H1 (cell line): ENCODE measurements at regions of chr15 and their contacts with region 1.

Region 1: GRCh38 chr15:68783226-68784058 is 37.3 kb downstream of the ANP32A start:
- DNase-seq: peak in 1 of 2 experiments; percentile 82
- H3K4me3 ChIP-seq: no peak overlapping the region
- H3K27ac ChIP-seq: no peak overlapping the region
- H3K4me1 ChIP-seq: peaks cover 0 to 12% (median 4%) of the 10 kb centered on the region in 4 experiments; a peak in 5 of 7 replicates
- H3K27me3 ChIP-seq: no peaks in the 10 kb centered on the region
- CTCF ChIP-seq: peak; percentile 77 to 79 (median 79)
- EP300 ChIP-seq: no peak
- POLR2A ChIP-seq: no peak
- RAD21 ChIP-seq: peak; percentile 84 to 86

Region 2: DNA sequence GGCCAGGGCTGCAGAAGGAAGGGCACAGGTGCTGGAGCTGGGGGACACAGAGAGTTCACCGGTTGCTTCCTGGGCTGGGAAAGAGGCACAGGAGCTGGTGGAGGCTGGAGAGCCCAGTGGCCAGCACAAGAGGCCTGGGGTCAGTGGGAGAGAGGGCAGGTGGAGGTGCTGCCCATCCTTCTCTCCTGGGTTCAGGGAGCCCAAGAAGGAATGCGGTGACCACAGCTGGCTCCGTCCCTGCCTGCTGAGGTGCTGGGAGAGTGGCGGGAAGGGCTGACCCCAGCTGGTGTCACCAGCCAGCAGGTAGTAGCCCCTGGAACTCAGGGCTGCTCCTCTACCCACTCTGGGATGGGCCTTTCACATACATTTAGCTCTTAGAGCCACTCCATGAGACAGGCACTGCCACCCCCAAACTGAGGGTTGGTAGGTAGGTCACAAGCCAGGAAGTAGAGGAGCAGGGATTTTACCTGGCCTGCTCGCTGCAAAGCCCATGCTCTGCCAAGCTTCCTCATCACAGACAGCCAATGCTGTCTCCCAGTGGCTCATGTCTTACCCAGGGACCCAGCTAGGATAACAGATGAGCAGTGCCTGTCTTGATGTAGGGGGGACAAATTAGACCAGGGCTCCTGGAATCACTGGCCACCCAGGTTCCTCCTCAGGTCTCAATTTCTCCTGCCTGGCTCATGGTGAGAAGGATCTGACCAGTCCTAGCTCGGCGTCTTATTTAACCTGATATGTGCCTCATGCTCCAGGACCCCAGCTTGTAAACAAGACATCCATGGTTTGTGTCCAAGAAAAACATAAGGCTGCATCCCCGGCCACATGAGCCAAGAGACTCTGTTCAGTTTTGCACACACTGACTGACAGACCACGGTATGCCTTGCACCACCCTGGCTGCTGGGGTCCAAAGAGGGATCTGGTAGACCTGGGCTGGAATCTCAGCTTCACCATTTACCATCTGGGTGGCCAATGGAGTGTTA is 85.4 kb before region 1 on chr15:
- CTCF ChIA-PET with region 1: no interaction called
- POLR2A ChIA-PET with region 1: no interaction called
- DNase-seq: no peak
- H3K4me3 ChIP-seq: no peak overlapping the region
- H3K27ac ChIP-seq: no peak overlapping the region
- H3K4me1 ChIP-seq: peaks cover 2 to 26% (median 16%) of the 10 kb centered on the region in 4 experiments
- H3K27me3 ChIP-seq: 0 out of 7 replicates have a peak, but pooled peaks cover 0 to 3% (median 0%) of the 10 kb centered on the region in 4 experiments
- CTCF ChIP-seq: no peak
- EP300 ChIP-seq: no peak
- POLR2A ChIP-seq: no peak
- RAD21 ChIP-seq: no peak

Region 3: DNA sequence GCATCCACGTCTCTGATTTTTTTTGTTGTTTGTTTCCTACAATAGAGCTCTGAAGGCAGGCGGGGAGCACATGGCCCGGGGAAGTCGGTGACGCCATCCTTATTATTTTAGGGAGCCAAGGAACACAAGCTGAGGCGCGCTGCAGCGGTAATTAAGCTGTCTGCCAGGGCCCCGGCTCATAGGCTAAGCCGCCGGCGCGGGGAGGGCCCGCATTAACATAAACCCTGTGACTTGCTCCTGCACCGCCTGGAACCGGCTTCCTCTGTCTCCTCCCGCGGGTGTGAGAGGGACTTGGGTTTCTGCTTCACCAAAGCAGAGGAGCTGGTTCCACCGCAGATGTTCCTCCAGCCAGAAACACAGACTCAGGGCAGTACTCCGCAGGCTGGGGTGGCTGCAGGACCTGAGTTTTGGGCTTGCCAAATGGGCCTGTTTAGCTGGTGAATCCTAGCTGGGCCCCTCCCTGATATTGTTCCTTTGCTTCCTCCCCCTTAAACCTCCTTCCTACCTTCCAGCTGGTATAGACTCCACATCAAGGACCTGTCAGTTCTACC is 11.9 kb after region 1 on chr15:
- CTCF ChIA-PET with region 1: interaction called, 21 read pairs
- POLR2A ChIA-PET with region 1: interaction called, 4 read pairs
- DNase-seq: peak; percentile 72 to 82
- H3K4me3 ChIP-seq: peak overlapping the region in 3 of 4 experiments; percentile 1 to 32 (median 7); a peak in 4 of 8 replicates
- H3K27ac ChIP-seq: peak overlapping the region; percentile 61
- H3K4me1 ChIP-seq: peaks cover 22 to 51% (median 40%) of the 10 kb centered on the region in 4 experiments
- H3K27me3 ChIP-seq: no peaks in the 10 kb centered on the region; a peak in 1 of 7 replicates
- CTCF ChIP-seq: no peak
- EP300 ChIP-seq: no peak
- POLR2A ChIP-seq: peak in 1 of 2 experiments; percentile 77; a peak in 2 of 3 replicates
- RAD21 ChIP-seq: no peak

Region 4: DNA sequence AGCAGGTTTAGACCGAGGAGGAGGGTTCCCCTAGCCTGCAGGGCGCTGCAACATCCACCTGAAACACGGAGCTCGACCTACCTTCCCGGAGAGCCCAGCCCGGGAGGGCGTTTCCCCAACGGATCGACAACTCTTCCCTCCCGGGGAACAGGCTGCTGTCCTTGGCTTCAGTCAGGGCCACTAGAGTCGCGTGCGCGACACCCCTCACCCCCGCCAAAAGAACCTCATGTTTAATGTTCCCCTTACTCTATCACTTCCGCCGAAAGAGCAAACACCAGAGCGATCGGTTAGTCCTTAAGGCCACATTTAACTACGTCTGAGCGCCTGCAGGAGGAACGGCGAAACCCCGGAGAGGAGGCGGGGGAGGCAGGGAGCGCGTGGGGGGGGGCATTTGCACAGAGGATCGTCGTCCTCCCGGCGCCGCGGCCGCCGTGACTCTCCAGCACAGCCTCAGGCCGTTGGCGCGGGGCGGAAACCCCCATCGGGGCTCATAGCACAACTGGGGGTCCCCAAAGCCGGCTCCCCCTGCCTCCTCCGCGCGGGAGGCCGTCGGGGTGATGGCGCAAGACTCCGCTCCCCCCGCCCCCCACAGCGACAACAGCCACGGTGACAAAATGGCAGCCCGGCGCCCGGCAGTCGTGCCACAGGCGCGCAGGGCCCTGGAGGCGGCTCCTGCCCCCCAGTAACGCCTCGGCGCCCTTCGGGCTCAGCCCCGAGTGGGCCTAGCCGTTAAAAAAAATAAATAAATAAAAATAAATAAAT is 34.0 kb after region 1 on chr15:
- CTCF ChIA-PET with region 1: interaction called, 11 read pairs
- POLR2A ChIA-PET with region 1: interaction called, 7 read pairs
- DNase-seq: peak in 1 of 2 experiments; percentile 61
- H3K4me3 ChIP-seq: peak overlapping the region; percentile 72 to 94 (median 92)
- H3K27ac ChIP-seq: peak overlapping the region; percentile 74; the same call in 1 of the 2 replicates
- H3K4me1 ChIP-seq: peaks cover 10 to 22% (median 16%) of the 10 kb centered on the region in 4 experiments; a peak in 6 of 7 replicates
- H3K27me3 ChIP-seq: peaks cover 2 to 10% (median 7%) of the 10 kb centered on the region in 4 experiments
- CTCF ChIP-seq: no peak
- EP300 ChIP-seq: no peak
- POLR2A ChIP-seq: peak in 1 of 2 experiments; percentile 47; a peak in 1 of 3 replicates
- RAD21 ChIP-seq: no peak

Region 5: DNA sequence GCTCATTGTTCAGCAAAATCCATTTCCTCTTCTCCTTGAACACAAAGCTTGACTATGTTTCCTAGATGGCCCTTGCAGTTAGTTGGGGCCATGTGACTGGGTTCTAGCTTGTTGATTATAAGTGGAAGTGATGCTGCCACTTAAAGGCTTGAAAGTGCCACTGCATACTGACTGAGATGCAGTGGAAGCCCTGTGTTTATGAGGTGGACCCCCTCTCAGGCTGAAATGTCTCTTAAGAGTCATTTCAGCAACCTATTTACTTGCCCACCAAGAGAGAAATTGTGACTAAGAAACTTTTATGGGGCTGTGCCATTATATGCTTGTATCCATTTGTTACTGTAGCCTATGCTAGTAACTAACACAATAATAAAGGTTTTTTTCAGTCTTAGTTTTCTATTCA is 45.6 kb after region 1 on chr15:
- CTCF ChIA-PET with region 1: interaction called, 12 read pairs
- POLR2A ChIA-PET with region 1: interaction called, 3 read pairs
- DNase-seq: no peak
- H3K4me3 ChIP-seq: no peak overlapping the region
- H3K27ac ChIP-seq: no peak overlapping the region
- H3K4me1 ChIP-seq: no peaks in the 10 kb centered on the region
- H3K27me3 ChIP-seq: peaks cover 5 to 29% (median 18%) of the 10 kb centered on the region in 4 experiments
- CTCF ChIP-seq: peak in 2 of 3 experiments; percentile 51 to 60; a peak in 3 of 4 replicates
- EP300 ChIP-seq: no peak
- POLR2A ChIP-seq: no peak
- RAD21 ChIP-seq: peak; percentile 53 to 72